Ovary (tissue), 10 donors: ENCODE measurements at regions of chr20 and their contacts with region 1.

Region 1: GRCh38 chr20:50625986-50626677 is 65.2 kb downstream of the RIPOR3 start:
- DNase-seq: peak; percentile 73 to 84 (median 75)
- H3K4me3 ChIP-seq: no peak overlapping the region
- H3K27ac ChIP-seq: peak overlapping the region in 1 of 2 donors; percentile 40
- H3K4me1 ChIP-seq: peaks cover 7% of the 10 kb centered on the region
- H3K27me3 ChIP-seq: no peaks in the 10 kb centered on the region
- CTCF ChIP-seq: peak; percentile 33 to 66 (median 66)
- EP300 ChIP-seq: no peak
- POLR2A ChIP-seq: no peak

Region 2: DNA sequence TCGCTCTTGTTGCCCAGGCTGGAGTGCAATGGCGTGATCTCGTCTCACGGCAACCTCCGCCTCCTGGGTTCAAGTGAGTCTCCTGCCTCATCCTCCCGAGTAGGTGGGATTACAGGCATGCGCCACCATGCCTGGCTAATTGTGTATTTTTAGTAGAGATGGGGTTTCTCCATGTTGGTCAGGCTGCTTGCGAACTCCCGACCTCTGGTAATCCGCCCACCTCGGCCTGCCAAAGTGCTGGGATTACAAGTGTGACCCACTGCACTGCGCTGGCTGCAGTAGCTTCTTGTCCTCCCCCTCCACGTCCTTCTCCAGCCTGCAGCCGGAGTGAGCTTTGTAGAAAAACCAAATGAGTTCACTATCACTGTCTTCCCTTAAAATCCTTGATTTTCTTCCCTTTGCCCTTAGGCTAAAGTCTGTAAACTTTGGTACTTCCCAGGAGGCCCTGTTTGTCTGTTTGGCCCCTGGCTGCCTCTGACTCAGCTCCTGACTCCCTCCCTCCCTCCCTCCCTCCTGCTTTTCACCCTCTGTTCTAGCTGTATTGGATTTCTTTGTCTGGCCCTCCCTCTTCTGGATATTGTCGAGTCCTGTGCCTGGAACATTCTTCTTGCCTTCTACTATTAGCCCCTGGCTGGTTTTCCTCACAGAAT is 118.1 kb after region 1 on chr20:
- intact Hi-C with region 1: loop called in 1 of 4 experiments (anchors 5 kb)
- DNase-seq: peak; percentile 65 to 79 (median 74)
- H3K4me3 ChIP-seq: no peak overlapping the region
- H3K27ac ChIP-seq: peak overlapping the region; percentile 51 to 81
- H3K4me1 ChIP-seq: peaks cover 7% of the 10 kb centered on the region
- H3K27me3 ChIP-seq: no peaks in the 10 kb centered on the region
- CTCF ChIP-seq: peak in 2 of 3 donors; percentile 28 to 36
- EP300 ChIP-seq: no peak
- POLR2A ChIP-seq: no peak